Activated CD4-positive, alpha-beta memory T cell treated with anti-CD3 and anti-CD28 coated beads, Interleukin-2, amount 10 ng/mL, durations not matched to agents 7 days and 5 days (primary cell): ENCODE measurements at regions of chr10 and their contacts with region 1.

Region 1: DNA sequence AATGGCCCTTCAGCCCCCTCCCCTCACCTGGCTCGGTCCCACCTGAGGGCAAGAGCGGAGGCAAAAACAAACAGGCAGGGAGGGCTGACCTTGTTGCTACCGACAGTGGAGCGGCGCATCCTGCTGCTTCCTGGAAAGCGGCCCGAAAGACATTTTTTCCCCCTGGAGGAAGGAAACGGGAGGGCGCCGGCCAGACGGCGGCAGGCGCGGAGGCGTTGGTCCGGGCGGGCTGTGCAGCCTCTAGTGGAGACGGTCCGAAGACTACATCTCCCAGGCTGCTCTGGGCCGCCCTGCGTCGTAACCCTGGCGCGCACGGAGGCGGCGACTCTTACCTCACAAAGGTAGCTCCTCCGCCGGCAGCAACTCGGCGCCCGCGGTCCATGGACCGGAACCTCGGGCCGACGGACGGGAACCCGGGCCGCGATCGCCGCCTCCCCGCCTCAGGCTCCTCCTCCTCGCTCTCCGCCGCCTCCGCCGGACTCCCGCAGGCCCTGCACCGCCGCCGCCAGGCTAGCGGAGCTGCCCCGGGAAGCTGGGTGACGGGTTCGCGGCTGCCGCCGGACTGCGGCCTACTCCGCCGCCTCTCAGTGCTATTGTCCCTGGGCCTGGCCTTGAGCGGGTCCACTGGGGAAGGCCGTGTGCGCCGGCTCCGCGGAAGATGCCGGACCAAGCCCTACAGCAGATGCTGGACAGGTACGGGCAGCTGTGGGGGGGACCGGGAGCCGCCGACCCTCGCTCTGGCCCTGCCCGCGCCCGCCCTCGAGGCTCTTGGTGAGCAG is at the starts of genes CPEB3 and MARCHF5:
- DNase-seq: peak; percentile 95
- H3K4me3 Mint-ChIP-seq: peak within 1 kb of the TSS; percentile 86
- H3K27ac Mint-ChIP-seq: peak within 1 kb of the TSS; percentile 70
- H3K4me1 Mint-ChIP-seq: peaks cover 27% of the 10 kb centered on the region
- H3K27me3 Mint-ChIP-seq: no peaks in the 10 kb centered on the region
- total RNA-seq, gene CPEB3: 2.8 to 3.0 TPM
- total RNA-seq, gene MARCHF5: 28.5 to 29.3 TPM

Region 2: DNA sequence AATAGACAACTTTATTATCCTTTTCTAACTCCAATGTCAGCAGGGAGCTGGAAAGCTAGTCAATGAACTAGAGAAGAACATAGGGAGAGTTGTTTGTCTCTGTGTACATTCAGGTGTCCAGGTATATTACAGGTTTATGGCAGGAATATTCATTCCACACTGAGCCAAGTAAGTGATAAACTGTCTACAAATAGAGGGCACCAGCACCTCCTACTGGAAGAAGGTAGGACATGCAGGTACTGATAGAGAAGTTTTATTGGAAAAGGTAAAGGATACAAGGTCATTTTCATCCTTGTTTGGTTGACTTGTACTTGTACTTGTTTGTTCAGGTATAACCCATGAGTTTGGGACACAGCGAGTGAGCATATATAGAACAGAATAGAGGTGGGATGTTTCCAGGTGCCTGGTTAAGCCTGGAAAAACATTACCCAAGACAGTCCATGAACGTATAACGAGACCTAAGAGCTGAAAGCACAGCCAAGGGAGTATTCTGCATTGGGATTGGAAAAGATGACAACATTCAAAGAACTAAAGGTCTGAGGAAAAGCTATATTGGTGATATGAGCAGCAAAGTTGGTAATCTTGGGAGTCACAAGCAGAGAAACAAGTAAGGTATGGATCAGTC is 596.7 kb before region 1 on chr10:
- CTCF ChIA-PET with region 1: no interaction called
- POLR2A ChIA-PET with region 1: no interaction called
- DNase-seq: no peak
- H3K4me3 Mint-ChIP-seq: no peak overlapping the region
- H3K27ac Mint-ChIP-seq: no peak overlapping the region
- H3K4me1 Mint-ChIP-seq: peaks cover 5% of the 10 kb centered on the region
- H3K27me3 Mint-ChIP-seq: peaks cover 3% of the 10 kb centered on the region

Region 3: GRCh38 chr10:91923371-91924211 is 367.4 kb before region 1 on chr10 and contains the start of gene BTAF1:
- CTCF ChIA-PET with region 1: interaction called, 3 read pairs
- POLR2A ChIA-PET with region 1: interaction called, 14 read pairs
- DNase-seq: peak; percentile 92
- H3K4me3 Mint-ChIP-seq: peak within 1 kb of the TSS; percentile 94
- H3K27ac Mint-ChIP-seq: peak within 1 kb of the TSS; percentile 96
- H3K4me1 Mint-ChIP-seq: peaks cover 45% of the 10 kb centered on the region
- H3K27me3 Mint-ChIP-seq: peaks cover 2% of the 10 kb centered on the region
- total RNA-seq, gene BTAF1: 51.3 to 54.9 TPM

Region 4: DNA sequence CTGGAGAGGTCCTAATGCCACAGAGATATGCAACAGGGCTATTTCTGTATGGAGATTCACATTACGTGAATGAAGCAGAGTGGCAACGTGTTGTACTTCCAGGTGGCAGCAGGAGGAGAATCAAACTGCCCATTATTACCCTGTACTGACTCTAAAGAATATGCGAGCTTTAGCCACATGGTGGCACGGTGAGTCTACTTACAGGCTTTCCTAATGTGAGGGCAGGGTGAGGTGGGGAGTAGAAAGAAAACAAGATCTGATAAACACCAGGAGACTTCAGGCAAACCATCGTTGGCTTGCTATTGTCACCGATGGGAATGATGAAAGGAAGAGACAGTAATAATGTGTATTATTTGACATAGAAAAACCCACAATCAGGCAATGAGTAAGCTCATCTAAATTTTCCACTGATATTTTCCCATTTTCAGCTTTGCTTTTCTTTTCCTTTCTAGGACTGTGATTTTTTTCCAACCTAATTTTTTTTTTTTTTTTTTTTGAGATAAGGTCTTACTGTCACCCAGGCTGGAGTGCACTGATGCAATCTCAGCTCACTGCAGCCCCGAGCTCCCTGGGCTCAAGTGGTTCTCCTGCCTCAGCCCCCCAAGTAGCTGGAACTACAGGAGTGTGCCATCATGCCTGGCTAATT is 203.2 kb before region 1 on chr10:
- CTCF ChIA-PET with region 1: interaction called, 62 read pairs
- POLR2A ChIA-PET with region 1: interaction called, 9 read pairs
- DNase-seq: peak; percentile 75
- H3K4me3 Mint-ChIP-seq: no peak overlapping the region
- H3K27ac Mint-ChIP-seq: no peak overlapping the region
- H3K4me1 Mint-ChIP-seq: peaks cover 17% of the 10 kb centered on the region
- H3K27me3 Mint-ChIP-seq: no peaks in the 10 kb centered on the region

Region 5: DNA sequence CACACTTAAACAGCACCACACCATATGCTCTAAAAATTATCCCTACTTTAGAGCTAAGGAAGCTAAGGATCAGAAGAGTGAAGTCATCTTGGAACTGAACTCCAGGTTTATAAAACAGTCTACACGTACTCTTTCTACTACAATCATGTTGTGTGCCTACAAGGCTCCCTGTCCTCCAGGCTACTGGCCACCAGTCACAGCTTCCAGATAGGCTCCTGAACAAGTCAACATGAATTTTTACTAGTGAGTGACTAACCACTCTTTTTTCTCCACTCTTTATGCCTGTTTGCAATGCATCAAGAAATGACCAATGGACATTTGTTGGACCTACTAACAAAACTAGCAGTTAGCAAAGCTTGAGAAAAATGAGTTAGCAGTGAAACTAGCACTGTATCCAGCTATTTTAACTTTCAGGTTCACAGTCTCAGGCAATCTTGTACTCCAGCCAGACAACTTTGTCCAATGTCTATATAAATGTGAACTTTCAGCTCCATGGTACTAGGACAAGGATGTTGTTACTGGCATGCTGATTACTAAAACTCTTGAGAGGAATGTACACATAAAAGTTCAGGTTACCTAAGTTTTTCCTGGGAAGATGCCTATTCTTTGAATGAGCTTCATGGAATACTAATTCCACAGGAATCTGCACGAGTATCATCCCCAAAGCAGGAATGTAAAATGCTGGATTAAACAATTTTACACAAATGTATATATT is 187.5 kb before region 1 on chr10:
- CTCF ChIA-PET with region 1: interaction called, 19 read pairs
- POLR2A ChIA-PET with region 1: interaction called, 18 read pairs
- DNase-seq: no peak
- H3K4me3 Mint-ChIP-seq: no peak overlapping the region
- H3K27ac Mint-ChIP-seq: no peak overlapping the region
- H3K4me1 Mint-ChIP-seq: peaks cover 28% of the 10 kb centered on the region
- H3K27me3 Mint-ChIP-seq: peaks cover 2% of the 10 kb centered on the region

Region 6: GRCh38 chr10:92208736-92209327 is 82.2 kb before region 1 on chr10:
- CTCF ChIA-PET with region 1: interaction called, 16 read pairs
- POLR2A ChIA-PET with region 1: interaction called, 7 read pairs
- DNase-seq: no peak
- H3K4me3 Mint-ChIP-seq: no peak overlapping the region
- H3K27ac Mint-ChIP-seq: no peak overlapping the region
- H3K4me1 Mint-ChIP-seq: peaks cover 28% of the 10 kb centered on the region
- H3K27me3 Mint-ChIP-seq: no peaks in the 10 kb centered on the region

Region 7: DNA sequence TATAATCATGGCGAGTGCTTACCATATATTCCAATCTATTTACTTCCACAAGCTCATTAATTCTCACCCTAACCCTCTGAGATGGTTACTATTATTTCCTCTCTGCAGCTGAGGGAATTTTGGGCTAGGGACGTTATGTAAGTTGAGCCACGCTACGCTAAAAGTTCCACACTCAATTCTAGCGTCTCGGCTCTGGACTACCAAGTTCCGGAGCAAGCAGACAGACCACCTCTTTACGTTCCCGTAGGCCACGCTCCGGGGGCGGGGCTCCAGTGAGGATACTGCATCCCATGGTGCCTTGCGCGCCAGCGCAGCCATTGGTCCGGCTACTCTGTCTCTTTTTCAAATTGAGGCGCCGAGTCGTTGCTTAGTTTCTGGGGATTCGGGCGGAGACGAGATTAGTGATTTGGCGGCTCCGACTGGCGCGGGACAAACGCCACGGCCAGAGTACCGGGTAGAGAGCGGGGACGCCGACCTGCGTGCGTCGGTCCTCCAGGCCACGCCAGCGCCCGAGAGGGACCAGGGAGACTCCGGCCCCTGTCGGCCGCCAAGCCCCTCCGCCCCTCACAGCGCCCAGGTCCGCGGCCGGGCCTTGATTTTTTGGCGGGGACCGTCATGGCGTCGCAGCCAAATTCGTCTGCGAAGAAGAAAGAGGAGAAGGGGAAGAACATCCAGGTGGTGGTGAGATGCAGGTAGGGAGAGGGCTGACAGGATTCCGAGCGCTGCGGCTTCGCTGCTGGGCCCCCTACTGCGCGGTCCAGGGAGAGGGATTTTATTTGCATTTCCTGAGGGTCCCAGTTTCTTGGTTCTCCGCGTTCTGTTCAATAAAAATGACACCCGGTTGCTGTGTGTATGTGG is 302.0 kb after region 1 on chr10 and contains the start of gene KIF11:
- CTCF ChIA-PET with region 1: interaction called, 4 read pairs
- POLR2A ChIA-PET with region 1: interaction called, 14 read pairs
- DNase-seq: peak; percentile 98
- H3K4me3 Mint-ChIP-seq: peak within 1 kb of the TSS; percentile 96
- H3K27ac Mint-ChIP-seq: peak within 1 kb of the TSS; percentile 100
- H3K4me1 Mint-ChIP-seq: peaks cover 50% of the 10 kb centered on the region
- H3K27me3 Mint-ChIP-seq: no peaks in the 10 kb centered on the region
- total RNA-seq, gene KIF11: 78.5 to 79.5 TPM